ENCODE measurements at regions of chr2 and their contacts with region 1.

Region 1: GRCh38 chr2:197378494-197379307 is 56.1 kb downstream of the SF3B1 start:
- DNase-seq: peak; percentile 52
- H3K4me3 ChIP-seq: no peak overlapping the region
- H3K27ac ChIP-seq: no peak overlapping the region
- H3K4me1 ChIP-seq: peaks cover 0 to 3% (median 0%) of the 10 kb centered on the region in 4 donors
- H3K27me3 ChIP-seq: no peaks in the 10 kb centered on the region
- CTCF ChIP-seq: peak; percentile 71 to 85 (median 73)
- EP300 ChIP-seq: no peak
- POLR2A ChIP-seq: no peak

Region 2: GRCh38 chr2:196798980-196799379 is 579.7 kb before region 1 on chr2:
- in situ Hi-C with region 1: loop called in 1 of 4 experiments (anchors 25 kb)
- intact Hi-C with region 1: no loop called
- DNase-seq: no peak
- H3K4me3 ChIP-seq: peak overlapping the region; percentile 59 to 91 (median 80)
- H3K27ac ChIP-seq: peak overlapping the region; percentile 73 to 86 (median 82)
- H3K4me1 ChIP-seq: peaks cover 6 to 36% (median 15%) of the 10 kb centered on the region in 4 donors
- H3K27me3 ChIP-seq: no peaks in the 10 kb centered on the region
- CTCF ChIP-seq: no peak
- EP300 ChIP-seq: no peak
- POLR2A ChIP-seq: no peak

Region 3: GRCh38 chr2:197011799-197012641 is 366.7 kb before region 1 on chr2:
- in situ Hi-C with region 1: loop called in 3 of 4 experiments (anchors 10 to 25 kb)
- intact Hi-C with region 1: no loop called
- DNase-seq: no peak
- H3K4me3 ChIP-seq: no peak overlapping the region
- H3K27ac ChIP-seq: no peak overlapping the region
- H3K4me1 ChIP-seq: no peaks in the 10 kb centered on the region
- H3K27me3 ChIP-seq: no peaks in the 10 kb centered on the region
- CTCF ChIP-seq: peak; percentile 67 to 76 (median 72)
- EP300 ChIP-seq: no peak
- POLR2A ChIP-seq: no peak

Region 4: DNA sequence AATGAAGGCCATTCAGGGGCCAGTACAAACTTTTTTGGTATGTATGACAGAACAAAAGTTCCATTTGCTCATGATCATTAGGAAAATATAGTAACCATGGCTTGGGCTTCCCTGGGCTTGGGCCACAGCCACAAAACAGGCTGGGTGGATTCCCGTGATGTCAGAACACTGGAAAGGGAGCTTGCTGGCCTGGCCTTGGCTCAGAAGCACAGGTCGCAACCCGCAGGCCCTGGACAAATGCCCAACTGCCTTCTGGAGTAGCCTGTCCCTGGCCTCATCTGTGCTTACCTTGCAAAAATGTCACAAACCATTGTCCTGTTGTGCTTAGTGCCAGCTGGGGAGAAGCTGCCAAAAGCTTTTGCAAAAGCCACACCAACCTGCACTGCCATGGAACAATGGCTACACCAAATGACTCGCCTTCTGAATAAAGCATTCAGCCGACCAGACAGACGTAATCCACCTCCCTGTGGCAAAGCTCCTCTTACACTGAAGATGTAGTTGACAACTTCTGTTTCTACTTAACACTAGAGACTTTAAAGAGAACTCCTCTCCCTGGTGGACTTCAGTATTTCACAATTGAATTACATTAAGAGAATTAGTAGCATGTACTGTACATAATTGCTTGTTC is 193.6 kb before region 1 on chr2:
- in situ Hi-C with region 1: loop called in 3 of 4 experiments (anchors 5 to 10 kb)
- intact Hi-C with region 1: no loop called
- DNase-seq: no peak
- H3K4me3 ChIP-seq: no peak overlapping the region
- H3K27ac ChIP-seq: no peak overlapping the region
- H3K4me1 ChIP-seq: peaks cover 0 to 5% (median 1%) of the 10 kb centered on the region in 4 donors
- H3K27me3 ChIP-seq: no peaks in the 10 kb centered on the region
- CTCF ChIP-seq: no peak
- EP300 ChIP-seq: no peak
- POLR2A ChIP-seq: no peak

Region 5: GRCh38 chr2:197191177-197191939 is 187.3 kb before region 1 on chr2:
- in situ Hi-C with region 1: loop called in 3 of 4 experiments (anchors 5 to 10 kb)
- intact Hi-C with region 1: no loop called
- DNase-seq: no peak
- H3K4me3 ChIP-seq: no peak overlapping the region
- H3K27ac ChIP-seq: no peak overlapping the region
- H3K4me1 ChIP-seq: peaks cover 0 to 21% (median 3%) of the 10 kb centered on the region in 4 donors
- H3K27me3 ChIP-seq: no peaks in the 10 kb centered on the region
- CTCF ChIP-seq: peak; percentile 71 to 91 (median 74)
- EP300 ChIP-seq: no peak
- POLR2A ChIP-seq: no peak

Region 6: DNA sequence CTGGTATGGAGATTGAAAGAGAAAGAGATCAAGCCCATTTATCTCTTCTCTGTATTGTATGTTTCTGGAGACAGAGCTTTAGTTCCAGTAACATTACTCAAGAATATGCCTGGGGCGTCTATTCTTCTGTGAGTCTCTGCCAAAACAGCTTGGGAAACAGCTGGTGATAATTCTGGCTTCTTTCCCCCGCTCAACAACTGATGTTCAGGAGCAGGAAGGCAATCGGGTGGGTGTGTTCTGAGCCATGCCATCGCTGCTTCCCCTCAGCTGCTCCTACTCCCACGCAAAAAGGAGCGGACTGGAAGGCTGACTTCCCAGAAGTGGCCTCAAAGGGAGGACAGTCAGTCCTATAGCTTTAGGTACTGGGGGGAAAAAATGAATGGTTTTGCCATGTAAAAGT is 1120.8 kb after region 1 on chr2:
- in situ Hi-C with region 1: no loop called
- intact Hi-C with region 1: no loop called
- DNase-seq: no peak
- H3K4me3 ChIP-seq: no peak overlapping the region
- H3K27ac ChIP-seq: no peak overlapping the region
- H3K4me1 ChIP-seq: peaks cover 4 to 13% (median 8%) of the 10 kb centered on the region in 4 donors
- H3K27me3 ChIP-seq: no peaks in the 10 kb centered on the region
- CTCF ChIP-seq: no peak
- EP300 ChIP-seq: no peak
- POLR2A ChIP-seq: no peak